ENCODE measurements at regions of chr7 and their contacts with region 1.

Region 1: GRCh38 chr7:75756991-75757676 is 14.9 kb downstream of the CCL26 start:
- DNase-seq: peak; percentile 60
- H3K4me3 ChIP-seq: no peak overlapping the region
- H3K27ac ChIP-seq: no peak overlapping the region
- H3K4me1 ChIP-seq: no peaks in the 10 kb centered on the region
- H3K27me3 ChIP-seq: no peaks in the 10 kb centered on the region
- CTCF ChIP-seq: peak; percentile 60

Region 2: GRCh38 chr7:75546237-75547015 is 210.7 kb before region 1 on chr7:
- CTCF ChIA-PET with region 1: no interaction called
- POLR2A ChIA-PET with region 1: no interaction called
- intact Hi-C with region 1: no loop called
- DNase-seq: no peak
- H3K4me3 ChIP-seq: no peak overlapping the region
- H3K27ac ChIP-seq: no peak overlapping the region
- H3K4me1 ChIP-seq: no peaks in the 10 kb centered on the region
- H3K27me3 ChIP-seq: no peaks in the 10 kb centered on the region
- CTCF ChIP-seq: no peak

Region 3: DNA sequence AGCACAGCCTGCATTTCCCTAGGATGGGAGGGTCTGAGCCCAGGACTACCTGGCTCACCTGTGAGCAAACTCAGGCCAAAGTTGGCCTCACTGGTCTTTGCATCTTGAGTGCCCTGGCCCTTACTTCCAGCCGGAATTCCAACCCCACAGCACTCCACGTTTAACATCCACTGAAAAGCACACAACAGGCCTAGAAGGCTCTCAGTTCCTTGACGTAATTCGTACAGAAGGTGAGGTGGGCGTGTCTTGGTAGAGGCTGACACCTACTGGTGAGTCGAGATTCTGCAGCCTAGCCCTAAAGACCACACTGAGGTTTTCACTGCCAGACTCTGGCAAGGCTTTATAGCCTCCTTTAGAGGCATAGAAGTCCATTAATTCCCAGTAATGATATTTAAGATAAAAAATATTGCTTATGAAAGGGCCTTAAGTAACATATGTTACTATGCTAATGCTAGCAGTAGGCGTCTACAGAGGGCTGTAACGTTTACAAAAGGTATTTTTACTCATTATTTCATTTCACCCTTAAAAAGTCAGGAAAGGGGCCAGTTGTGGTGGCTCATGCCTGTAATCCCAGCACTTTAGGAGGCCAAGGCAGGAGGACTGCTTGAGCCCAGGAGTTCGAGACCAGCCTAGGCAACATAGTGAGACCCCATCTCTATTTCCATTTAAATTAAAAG is 114.2 kb before region 1 on chr7:
- CTCF ChIA-PET with region 1: no interaction called
- POLR2A ChIA-PET with region 1: no interaction called
- intact Hi-C with region 1: loop called (anchors 5 kb)
- DNase-seq: peak; percentile 85
- H3K4me3 ChIP-seq: no peak overlapping the region
- H3K27ac ChIP-seq: no peak overlapping the region
- H3K4me1 ChIP-seq: peaks cover 11% of the 10 kb centered on the region
- H3K27me3 ChIP-seq: no peaks in the 10 kb centered on the region
- CTCF ChIP-seq: peak; percentile 86

Region 4: GRCh38 chr7:75872073-75872782 is 115.1 kb after region 1 on chr7:
- CTCF ChIA-PET with region 1: no interaction called
- POLR2A ChIA-PET with region 1: no interaction called
- intact Hi-C with region 1: no loop called
- DNase-seq: no peak
- H3K4me3 ChIP-seq: no peak overlapping the region
- H3K27ac ChIP-seq: no peak overlapping the region
- H3K4me1 ChIP-seq: peaks cover 6% of the 10 kb centered on the region
- H3K27me3 ChIP-seq: no peaks in the 10 kb centered on the region
- CTCF ChIP-seq: no peak

Measured in A673 (cell line).